HepG2 (cell line): ENCODE measurements at regions of chr9 and their contacts with region 1.

Region 1: GRCh38 chr9:6584881-6585597 is 60.5 kb downstream of the GLDC start:
- DNase-seq: peak; percentile 19
- ATAC-seq: peak; percentile 56; the same call in 2 of the 3 replicates
- H3K4me3 ChIP-seq: no peak overlapping the region
- H3K27ac ChIP-seq: no peak overlapping the region
- H3K4me1 ChIP-seq: peaks cover 7% of the 10 kb centered on the region
- H3K27me3 ChIP-seq: no peaks in the 10 kb centered on the region
- CTCF ChIP-seq: peak; percentile 44
- EP300 ChIP-seq: no peak
- POLR2A ChIP-seq: no peak
- RAD21 ChIP-seq: no peak

Region 2: GRCh38 chr9:6616951-6617602 is 32.0 kb after region 1 on chr9:
- CTCF ChIA-PET with region 1: no interaction called
- POLR2A ChIA-PET with region 1: no interaction called
- in situ Hi-C with region 1: no loop called
- intact Hi-C with region 1: no loop called
- DNase-seq: no peak
- ATAC-seq: no peak
- H3K4me3 ChIP-seq: no peak overlapping the region
- H3K27ac ChIP-seq: no peak overlapping the region
- H3K4me1 ChIP-seq: no peaks in the 10 kb centered on the region
- H3K27me3 ChIP-seq: no peaks in the 10 kb centered on the region
- CTCF ChIP-seq: no peak
- EP300 ChIP-seq: no peak
- POLR2A ChIP-seq: no peak
- RAD21 ChIP-seq: no peak

Region 3: DNA sequence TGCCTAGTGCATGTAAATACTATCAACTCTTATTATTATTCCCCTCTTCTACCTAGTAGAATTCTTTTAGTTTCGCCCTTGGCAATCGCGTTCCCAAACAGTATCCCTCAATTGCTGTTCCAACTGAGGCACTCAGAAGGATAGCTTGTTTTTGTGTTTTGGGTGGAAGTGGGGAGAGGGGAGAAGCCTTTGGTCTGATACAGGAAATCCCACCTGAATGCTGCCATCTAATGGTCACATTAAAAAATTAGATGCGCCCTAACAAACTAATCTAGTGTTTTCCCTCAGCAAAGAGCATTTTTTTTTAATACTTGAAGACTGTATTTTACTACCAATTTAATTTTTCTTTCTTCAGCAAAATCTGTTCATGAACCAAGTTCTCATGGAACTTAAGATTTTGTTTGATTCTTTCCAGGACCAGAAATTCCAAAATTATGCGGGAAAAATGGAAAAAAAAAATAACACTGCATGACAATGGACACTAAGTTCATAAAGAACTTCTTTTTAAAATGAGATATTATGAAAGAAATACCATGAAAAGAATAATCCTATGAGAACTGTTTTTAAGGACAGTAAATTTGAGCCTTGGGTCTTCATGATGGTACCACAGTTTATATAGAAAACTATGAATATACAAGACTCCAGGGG is 82.7 kb after region 1 on chr9:
- CTCF ChIA-PET with region 1: interaction called, 22 read pairs
- POLR2A ChIA-PET with region 1: interaction called, 31 read pairs
- in situ Hi-C with region 1: no loop called
- intact Hi-C with region 1: loop called (anchors 1 kb)
- DNase-seq: no peak
- ATAC-seq: no peak
- H3K4me3 ChIP-seq: no peak overlapping the region
- H3K27ac ChIP-seq: no peak overlapping the region
- H3K4me1 ChIP-seq: peaks cover 70% of the 10 kb centered on the region
- H3K27me3 ChIP-seq: no peaks in the 10 kb centered on the region
- CTCF ChIP-seq: peak; percentile 69
- EP300 ChIP-seq: no peak
- POLR2A ChIP-seq: no peak
- RAD21 ChIP-seq: peak; percentile 47; the same call in 1 of the 2 replicates

Region 4: DNA sequence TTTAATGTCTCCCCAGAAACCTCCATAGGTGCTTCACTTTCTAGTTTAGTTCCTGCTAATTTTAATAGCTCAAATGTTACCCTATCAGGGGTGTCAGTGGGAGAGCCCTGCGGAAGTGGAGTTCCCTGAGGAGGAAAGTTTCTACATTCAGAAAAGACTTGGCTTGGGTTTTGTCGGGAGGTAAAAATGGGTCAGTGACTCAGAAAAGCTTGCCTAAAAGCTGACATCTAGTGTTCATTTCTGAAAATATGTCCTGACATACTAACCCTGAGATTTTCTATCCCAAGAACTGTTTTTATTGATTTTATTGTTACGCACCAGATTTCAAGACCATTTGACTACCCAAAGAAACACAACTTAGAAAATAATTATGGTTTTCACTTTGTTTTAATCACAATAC is 101.4 kb after region 1 on chr9:
- CTCF ChIA-PET with region 1: interaction called, 5 read pairs
- POLR2A ChIA-PET with region 1: interaction called, 5 read pairs
- in situ Hi-C with region 1: loop called (anchors 5 kb)
- intact Hi-C with region 1: loop called (anchors 1 kb)
- DNase-seq: peak; percentile 44
- ATAC-seq: no peak
- H3K4me3 ChIP-seq: no peak overlapping the region
- H3K27ac ChIP-seq: peak overlapping the region; percentile 36
- H3K4me1 ChIP-seq: peaks cover 27% of the 10 kb centered on the region
- H3K27me3 ChIP-seq: no peaks in the 10 kb centered on the region
- CTCF ChIP-seq: peak; percentile 41
- EP300 ChIP-seq: no peak
- POLR2A ChIP-seq: no peak
- RAD21 ChIP-seq: no peak

Region 5: DNA sequence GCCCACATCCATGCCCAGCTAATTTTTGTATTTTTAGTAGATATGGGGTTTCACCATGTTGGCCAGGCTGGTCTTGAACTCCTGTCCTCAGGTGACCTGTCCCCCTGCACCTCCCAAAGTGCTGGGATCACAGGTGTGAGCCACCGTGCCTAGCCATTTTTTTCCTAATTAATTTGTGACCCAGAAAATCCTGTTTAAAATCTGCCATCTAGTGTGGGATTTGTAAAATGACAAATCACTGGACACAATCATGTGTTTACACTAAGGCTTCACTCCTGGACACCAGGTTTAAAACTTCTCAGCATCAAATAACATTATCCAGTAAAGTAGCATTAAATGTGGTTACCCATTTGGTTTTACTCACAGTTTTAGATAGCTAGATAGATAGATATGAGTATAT is 154.2 kb after region 1 on chr9:
- CTCF ChIA-PET with region 1: interaction called, 3 read pairs
- POLR2A ChIA-PET with region 1: no interaction called
- in situ Hi-C with region 1: no loop called
- intact Hi-C with region 1: loop called (anchors 1 kb)
- DNase-seq: peak; percentile 39
- ATAC-seq: peak; percentile 69
- H3K4me3 ChIP-seq: no peak overlapping the region
- H3K27ac ChIP-seq: no peak overlapping the region
- H3K4me1 ChIP-seq: peaks cover 10% of the 10 kb centered on the region
- H3K27me3 ChIP-seq: no peaks in the 10 kb centered on the region
- CTCF ChIP-seq: peak; percentile 63
- EP300 ChIP-seq: no peak
- POLR2A ChIP-seq: no peak
- RAD21 ChIP-seq: peak; percentile 48